A673 (cell line): ENCODE measurements at regions of chr14 and their contacts with region 1.

Region 1: GRCh38 chr14:75660630-75661494 is at the starts of genes ERG28 and TTLL5:
- DNase-seq: peak; percentile 99
- H3K4me3 ChIP-seq: peak within 1 kb of the TSS; percentile 84
- H3K27ac ChIP-seq: peak within 1 kb of the TSS; percentile 76
- H3K4me1 ChIP-seq: no peaks in the 10 kb centered on the region
- H3K27me3 ChIP-seq: no peaks in the 10 kb centered on the region
- CTCF ChIP-seq: no peak
- total RNA-seq, gene ERG28: 38.3 and 43.3 TPM in 2 replicates
- total RNA-seq, gene TTLL5: 56.4 and 56.7 TPM in 2 replicates

Region 2: GRCh38 chr14:75307700-75308379 is 353.0 kb before region 1 on chr14:
- CTCF ChIA-PET with region 1: no interaction called
- POLR2A ChIA-PET with region 1: no interaction called
- intact Hi-C with region 1: no loop called
- DNase-seq: peak; percentile 86
- H3K4me3 ChIP-seq: no peak overlapping the region
- H3K27ac ChIP-seq: no peak overlapping the region
- H3K4me1 ChIP-seq: peaks cover 9% of the 10 kb centered on the region
- H3K27me3 ChIP-seq: no peaks in the 10 kb centered on the region
- CTCF ChIP-seq: peak; percentile 95

Region 3: DNA sequence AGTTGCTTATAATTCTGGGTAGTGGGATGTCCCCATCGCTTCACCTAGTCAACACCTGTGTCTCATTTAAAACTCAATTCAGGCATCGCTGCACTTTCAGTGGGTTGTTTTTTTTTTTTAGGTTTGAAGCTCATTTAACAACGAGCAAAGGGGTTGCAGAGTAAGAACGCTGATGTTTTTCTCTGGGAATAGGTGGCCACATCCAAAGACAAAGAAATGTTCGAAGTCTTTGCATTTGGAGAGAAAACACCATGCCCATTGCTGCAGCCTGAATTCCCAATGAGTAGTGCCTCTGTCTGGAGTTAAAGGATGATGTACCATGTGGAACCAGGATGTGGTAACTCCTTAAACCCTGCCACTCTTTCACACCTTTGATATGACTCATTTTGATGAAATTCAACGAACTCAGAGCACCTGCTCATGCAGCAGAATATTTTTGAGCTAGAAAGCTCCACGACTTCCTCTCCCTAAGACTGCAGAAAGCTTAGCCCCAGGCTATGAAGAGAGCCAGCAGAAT is 173.6 kb before region 1 on chr14:
- CTCF ChIA-PET with region 1: no interaction called
- POLR2A ChIA-PET with region 1: no interaction called
- intact Hi-C with region 1: no loop called
- DNase-seq: no peak
- H3K4me3 ChIP-seq: no peak overlapping the region
- H3K27ac ChIP-seq: no peak overlapping the region
- H3K4me1 ChIP-seq: no peaks in the 10 kb centered on the region
- H3K27me3 ChIP-seq: no peaks in the 10 kb centered on the region
- CTCF ChIP-seq: no peak

Region 4: DNA sequence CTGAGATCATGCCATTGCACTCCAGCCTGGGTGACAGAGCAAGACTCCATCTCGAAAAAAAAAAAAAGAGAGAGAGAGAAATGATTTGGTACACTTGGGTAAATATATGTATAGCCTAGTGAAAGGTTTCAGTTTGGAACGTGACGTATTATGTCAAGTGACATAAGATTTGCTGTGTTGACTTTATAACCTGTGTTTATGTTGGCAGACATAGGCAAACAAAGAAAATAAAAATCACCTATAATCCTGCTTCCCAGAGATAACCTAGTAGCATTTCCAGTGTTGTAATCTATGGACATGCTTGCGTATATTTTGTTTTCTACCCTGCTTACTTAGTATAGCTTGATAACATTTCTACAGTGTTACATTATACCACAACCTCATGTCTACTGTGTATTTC is 16.9 kb before region 1 on chr14:
- CTCF ChIA-PET with region 1: no interaction called
- POLR2A ChIA-PET with region 1: interaction called, 16 read pairs
- intact Hi-C with region 1: no loop called
- DNase-seq: no peak
- H3K4me3 ChIP-seq: no peak overlapping the region
- H3K27ac ChIP-seq: no peak overlapping the region
- H3K4me1 ChIP-seq: no peaks in the 10 kb centered on the region
- H3K27me3 ChIP-seq: no peaks in the 10 kb centered on the region
- CTCF ChIP-seq: no peak